ENCODE measurements at regions of chr1 and their contacts with region 1.

Region 1: DNA sequence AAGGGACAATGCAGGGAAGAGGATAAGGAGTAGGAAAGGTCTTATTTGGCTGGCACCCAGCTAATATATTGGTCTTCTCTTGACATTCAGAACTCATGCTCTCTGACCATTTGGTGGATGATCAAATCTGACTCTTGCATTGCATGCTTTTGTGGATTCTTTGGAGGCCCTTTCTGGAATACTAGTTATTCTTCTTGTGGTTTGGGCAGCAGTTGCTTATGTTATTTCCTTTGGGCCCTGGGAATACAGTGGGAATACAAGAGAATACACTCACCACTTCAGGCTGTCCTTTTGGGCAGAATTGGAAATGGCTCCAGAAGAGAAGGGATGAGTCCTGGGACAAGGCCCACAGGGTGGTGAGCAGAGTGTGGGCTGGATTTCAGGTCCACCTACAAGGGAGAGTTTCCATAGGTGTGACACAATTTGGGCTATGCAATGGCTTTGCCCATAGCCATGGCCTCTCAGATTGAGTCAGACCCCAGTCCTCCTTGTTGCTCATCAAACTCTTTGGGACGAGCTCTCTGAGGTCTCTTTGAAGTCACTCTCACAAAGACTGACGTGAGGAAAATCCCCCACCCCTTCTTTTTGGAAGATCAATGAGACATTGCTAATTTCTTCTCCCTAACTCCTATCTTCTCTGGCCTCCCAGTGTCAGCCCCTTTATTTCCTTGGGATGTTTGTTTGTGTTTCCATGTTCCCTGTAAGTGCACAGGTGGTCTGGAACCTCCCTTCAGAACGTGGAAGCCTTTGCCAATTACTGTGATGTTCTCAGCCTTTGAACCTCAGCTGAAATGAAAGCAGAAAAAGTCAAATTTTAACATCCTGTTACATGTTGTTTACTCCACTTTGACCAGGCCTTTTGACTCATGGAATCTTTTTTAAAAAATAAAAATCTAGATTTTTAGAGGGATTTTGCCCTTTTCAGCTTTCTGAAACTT is 19.4 kb downstream of the HSD11B1 start:
- DNase-seq: no peak
- ATAC-seq: peak; percentile 72
- H3K4me3 ChIP-seq: no peak overlapping the region
- H3K27ac ChIP-seq: no peak overlapping the region
- H3K4me1 ChIP-seq: no peaks in the 10 kb centered on the region; the same call in 1 of the 2 replicates
- H3K27me3 ChIP-seq: no peaks in the 10 kb centered on the region
- CTCF ChIP-seq: no peak
- EP300 ChIP-seq: no peak; a peak in 1 of 4 replicates
- POLR2A ChIP-seq: no peak
- RAD21 ChIP-seq: no peak

Region 2: GRCh38 chr1:209363112-209363511 is 360.9 kb before region 1 on chr1:
- CTCF ChIA-PET with region 1: no interaction called
- POLR2A ChIA-PET with region 1: no interaction called
- RAD21 ChIA-PET with region 1: no interaction called
- SMC1A ChIA-PET with region 1: no interaction called
- in situ Hi-C with region 1: no loop called
- intact Hi-C with region 1: no loop called
- DNase-seq: no peak
- ATAC-seq: no peak
- H3K4me3 ChIP-seq: no peak overlapping the region
- H3K27ac ChIP-seq: no peak overlapping the region
- H3K4me1 ChIP-seq: no peaks in the 10 kb centered on the region
- H3K27me3 ChIP-seq: no peaks in the 10 kb centered on the region; a peak in 1 of 4 replicates
- CTCF ChIP-seq: no peak
- EP300 ChIP-seq: no peak
- POLR2A ChIP-seq: no peak
- RAD21 ChIP-seq: no peak

Region 3: GRCh38 chr1:209704584-209704983 is 19.4 kb before region 1 on chr1 and contains the start of gene HSD11B1:
- CTCF ChIA-PET with region 1: no interaction called
- POLR2A ChIA-PET with region 1: interaction called, 4 read pairs
- RAD21 ChIA-PET with region 1: interaction called, 3 read pairs
- SMC1A ChIA-PET with region 1: interaction called, 10 read pairs
- in situ Hi-C with region 1: no loop called
- intact Hi-C with region 1: no loop called
- DNase-seq: no peak
- ATAC-seq: no peak
- H3K4me3 ChIP-seq: no peak within 1 kb of the TSS
- H3K27ac ChIP-seq: no peak within 1 kb of the TSS
- H3K4me1 ChIP-seq: peaks cover 3% of the 10 kb centered on the region; the same call in 1 of the 2 replicates
- H3K27me3 ChIP-seq: no peaks in the 10 kb centered on the region
- CTCF ChIP-seq: no peak
- EP300 ChIP-seq: no peak
- POLR2A ChIP-seq: no peak
- RAD21 ChIP-seq: no peak
- polyA plus RNA-seq, gene HSD11B1: 0.04 to 0.27 TPM

Region 4: DNA sequence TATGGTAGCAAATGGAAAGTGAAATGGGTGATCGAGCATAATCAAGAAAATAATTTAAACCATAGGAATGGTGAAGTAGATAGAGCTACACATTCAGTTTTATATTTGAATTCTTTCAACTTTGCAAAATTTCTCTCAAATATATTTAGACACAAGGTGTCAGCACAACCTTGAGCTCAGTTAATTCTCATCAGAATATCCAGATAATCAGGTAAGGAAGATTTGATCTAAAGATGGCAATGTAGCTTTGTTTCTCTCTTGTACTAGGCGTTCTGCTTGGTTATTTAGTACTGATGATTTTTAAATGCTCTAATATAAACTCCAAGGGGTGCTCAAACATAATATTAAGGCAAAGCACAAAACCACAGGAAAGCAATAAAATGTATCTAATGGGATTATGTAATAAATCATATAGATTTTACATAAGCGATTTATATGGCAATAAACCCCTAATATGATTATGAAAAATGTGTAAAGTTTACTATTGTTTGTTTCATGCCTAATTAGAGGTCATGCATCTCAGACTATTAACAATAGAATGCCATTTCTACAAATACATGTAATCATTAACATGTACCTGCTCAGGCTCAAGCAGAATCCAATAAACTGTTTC is 476.2 kb after region 1 on chr1:
- CTCF ChIA-PET with region 1: no interaction called
- POLR2A ChIA-PET with region 1: no interaction called
- RAD21 ChIA-PET with region 1: no interaction called
- SMC1A ChIA-PET with region 1: no interaction called
- in situ Hi-C with region 1: no loop called
- intact Hi-C with region 1: no loop called
- DNase-seq: no peak
- ATAC-seq: no peak
- H3K4me3 ChIP-seq: no peak overlapping the region
- H3K27ac ChIP-seq: no peak overlapping the region
- H3K4me1 ChIP-seq: no peaks in the 10 kb centered on the region
- H3K27me3 ChIP-seq: peaks cover 0 to 3% of the 10 kb centered on the region in 2 experiments; a peak in 1 of 4 replicates
- CTCF ChIP-seq: no peak; a peak in 1 of 6 replicates
- EP300 ChIP-seq: no peak
- POLR2A ChIP-seq: no peak
- RAD21 ChIP-seq: no peak